ENCODE measurements at regions of chr13 and their contacts with region 1.

Region 1: DNA sequence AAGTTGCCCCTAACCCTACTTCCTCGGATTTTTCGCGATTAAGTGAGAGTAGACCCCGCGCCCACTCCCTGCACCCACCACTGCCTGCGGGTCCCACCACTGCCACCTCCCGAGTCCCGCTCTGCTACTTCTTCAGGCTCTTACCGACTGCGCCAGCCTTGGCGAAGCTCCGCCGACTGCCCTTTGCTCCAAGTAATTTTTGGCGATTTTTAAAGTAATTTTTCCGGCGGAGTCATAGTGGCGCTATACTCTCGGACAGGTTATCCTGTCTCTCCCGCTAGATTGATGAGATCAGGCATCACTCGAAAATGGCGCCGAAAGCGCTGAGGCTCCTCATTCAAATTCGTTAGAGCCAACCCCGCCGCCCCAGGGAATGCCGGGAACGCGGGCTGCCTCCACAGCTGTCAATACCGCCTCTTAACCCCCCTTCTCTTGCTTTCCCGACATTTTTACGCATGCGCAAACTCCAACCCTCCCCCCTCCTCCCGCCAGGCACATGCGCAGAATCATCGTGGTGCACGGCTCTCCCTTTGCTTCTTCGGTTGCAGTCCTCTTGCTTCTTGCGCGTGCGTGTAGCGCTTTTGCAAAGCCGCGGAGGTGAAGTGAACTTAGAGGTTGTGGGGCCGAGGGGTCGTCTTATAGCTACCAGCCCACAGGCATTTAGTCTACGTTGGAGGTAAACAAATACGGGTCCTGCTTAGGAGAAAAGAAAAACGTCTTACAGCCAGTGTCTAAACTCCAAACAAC is 66.6 kb downstream of the KCNRG start:
- DNase-seq: peak; percentile 99
- H3K4me3 Mint-ChIP-seq: peak overlapping the region; percentile 97
- H3K27ac Mint-ChIP-seq: peak overlapping the region; percentile 99
- H3K4me1 Mint-ChIP-seq: peaks cover 11% of the 10 kb centered on the region
- H3K27me3 Mint-ChIP-seq: no peaks in the 10 kb centered on the region
- CTCF ChIP-seq: no peak

Region 2: GRCh38 chr13:49821216-49822030 is 260.4 kb before region 1 on chr13:
- CTCF ChIA-PET with region 1: no interaction called
- POLR2A ChIA-PET with region 1: no interaction called
- intact Hi-C with region 1: no loop called
- DNase-seq: peak; percentile 45
- H3K4me3 Mint-ChIP-seq: no peak overlapping the region
- H3K27ac Mint-ChIP-seq: no peak overlapping the region
- H3K4me1 Mint-ChIP-seq: no peaks in the 10 kb centered on the region
- H3K27me3 Mint-ChIP-seq: no peaks in the 10 kb centered on the region
- CTCF ChIP-seq: no peak

Region 3: DNA sequence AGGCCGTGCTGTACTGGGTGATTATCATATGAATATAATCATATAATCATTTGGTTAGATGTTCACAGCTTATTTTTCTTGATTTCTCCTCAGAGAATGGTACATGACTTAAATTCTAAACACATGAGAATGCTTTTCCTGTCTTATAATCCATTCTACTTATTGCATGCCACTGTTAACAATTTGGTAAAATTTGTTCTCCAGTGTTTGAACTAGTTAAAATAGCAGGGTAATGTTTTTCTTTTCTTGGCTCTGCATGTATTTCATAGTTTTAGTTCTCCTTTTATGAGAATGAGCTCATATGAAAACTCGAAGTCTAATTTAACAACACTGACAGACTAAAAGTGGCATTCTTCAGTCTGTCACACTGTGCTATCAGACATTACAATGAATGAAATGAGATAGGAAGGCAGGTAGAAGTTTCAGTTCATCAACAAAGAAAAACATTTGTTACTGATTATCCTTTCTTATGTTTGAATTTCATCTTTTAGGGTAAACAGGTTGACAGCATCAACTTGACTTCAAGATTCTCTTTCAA is 155.9 kb before region 1 on chr13:
- CTCF ChIA-PET with region 1: no interaction called
- POLR2A ChIA-PET with region 1: no interaction called
- intact Hi-C with region 1: no loop called
- DNase-seq: no peak
- H3K4me3 Mint-ChIP-seq: no peak overlapping the region
- H3K27ac Mint-ChIP-seq: peak overlapping the region; percentile 36
- H3K4me1 Mint-ChIP-seq: no peaks in the 10 kb centered on the region
- H3K27me3 Mint-ChIP-seq: no peaks in the 10 kb centered on the region
- CTCF ChIP-seq: no peak

Region 4: GRCh38 chr13:49936085-49936940 is 145.5 kb before region 1 on chr13 and contains the start of gene SPRYD7:
- CTCF ChIA-PET with region 1: no interaction called
- POLR2A ChIA-PET with region 1: interaction called, 11 read pairs
- intact Hi-C with region 1: no loop called
- DNase-seq: peak; percentile 97
- H3K4me3 Mint-ChIP-seq: peak within 1 kb of the TSS; percentile 88
- H3K27ac Mint-ChIP-seq: peak within 1 kb of the TSS; percentile 72
- H3K4me1 Mint-ChIP-seq: peaks cover 7% of the 10 kb centered on the region
- H3K27me3 Mint-ChIP-seq: no peaks in the 10 kb centered on the region
- CTCF ChIP-seq: peak; percentile 88
- total RNA-seq, gene SPRYD7: 15.1 and 19.5 TPM in 2 replicates

Region 5: DNA sequence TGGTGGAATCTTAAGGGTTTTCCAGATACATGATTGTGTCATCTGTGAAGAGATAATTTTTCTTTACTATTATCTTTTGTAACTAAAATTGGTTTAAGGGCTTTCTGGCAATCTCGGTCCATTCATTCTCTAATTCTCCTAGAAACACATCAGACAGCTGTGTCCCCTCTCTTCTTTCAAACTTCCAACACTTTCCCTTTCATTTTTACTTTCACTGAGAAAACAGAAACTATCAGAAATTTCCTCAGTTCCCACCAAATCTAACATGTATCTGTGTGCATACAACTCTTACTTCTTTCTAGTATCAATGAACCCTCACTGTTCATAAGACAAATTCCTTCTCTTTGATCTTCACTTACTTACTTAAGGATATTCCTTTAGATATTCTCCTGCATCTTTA is 26.4 kb before region 1 on chr13:
- CTCF ChIA-PET with region 1: interaction called, 3 read pairs
- POLR2A ChIA-PET with region 1: interaction called, 13 read pairs
- intact Hi-C with region 1: no loop called
- DNase-seq: no peak
- H3K4me3 Mint-ChIP-seq: peak overlapping the region; percentile 54
- H3K27ac Mint-ChIP-seq: peak overlapping the region; percentile 80
- H3K4me1 Mint-ChIP-seq: peaks cover 7% of the 10 kb centered on the region
- H3K27me3 Mint-ChIP-seq: no peaks in the 10 kb centered on the region
- CTCF ChIP-seq: no peak

Region 6: GRCh38 chr13:50094615-50095293 is 12.9 kb after region 1 on chr13:
- CTCF ChIA-PET with region 1: interaction called, 12 read pairs
- POLR2A ChIA-PET with region 1: interaction called, 4 read pairs
- intact Hi-C with region 1: no loop called
- DNase-seq: peak; percentile 10
- H3K4me3 Mint-ChIP-seq: no peak overlapping the region
- H3K27ac Mint-ChIP-seq: no peak overlapping the region
- H3K4me1 Mint-ChIP-seq: no peaks in the 10 kb centered on the region
- H3K27me3 Mint-ChIP-seq: no peaks in the 10 kb centered on the region
- CTCF ChIP-seq: no peak

Region 7: DNA sequence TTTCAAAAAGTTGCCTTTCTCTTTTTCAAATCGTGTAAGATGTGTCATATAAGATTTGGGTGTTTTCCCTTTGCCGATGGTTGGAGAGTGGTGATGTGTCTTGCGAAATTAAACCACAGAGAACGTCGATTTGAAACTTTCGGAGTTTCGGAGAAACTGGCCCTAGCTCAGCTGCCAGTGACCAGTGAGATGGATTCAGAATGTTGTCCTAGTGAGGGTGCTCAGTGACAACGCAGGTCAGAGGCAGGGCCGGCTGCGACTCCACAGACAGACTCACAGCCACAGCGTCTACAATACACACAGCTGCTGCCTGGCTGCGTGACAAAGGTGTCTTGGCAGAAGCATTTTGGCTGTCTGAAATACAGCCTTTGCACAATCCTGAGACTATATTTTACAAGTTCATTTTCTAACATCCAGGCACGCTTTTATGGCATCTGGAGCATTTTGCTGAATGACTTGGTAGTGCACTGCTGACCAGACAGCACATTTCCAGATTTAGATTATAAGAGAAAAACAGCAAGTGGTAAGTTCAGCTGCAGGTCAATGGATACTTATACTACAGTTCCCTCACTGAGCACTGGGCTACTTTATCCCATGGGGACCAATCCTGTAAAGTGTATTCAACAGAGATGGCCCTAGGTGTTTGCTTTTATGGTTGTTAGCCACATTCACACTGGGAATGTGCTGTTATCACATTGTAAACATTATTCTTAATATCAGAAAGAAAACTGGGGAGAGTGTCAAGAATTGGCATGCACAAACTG is 140.9 kb after region 1 on chr13:
- CTCF ChIA-PET with region 1: interaction called, 6 read pairs
- POLR2A ChIA-PET with region 1: interaction called, 35 read pairs
- intact Hi-C with region 1: loop called (anchors 5 kb)
- DNase-seq: peak; percentile 95
- H3K4me3 Mint-ChIP-seq: peak overlapping the region; percentile 72
- H3K27ac Mint-ChIP-seq: peak overlapping the region; percentile 98
- H3K4me1 Mint-ChIP-seq: peaks cover 40% of the 10 kb centered on the region
- H3K27me3 Mint-ChIP-seq: no peaks in the 10 kb centered on the region
- CTCF ChIP-seq: no peak

Region 8: DNA sequence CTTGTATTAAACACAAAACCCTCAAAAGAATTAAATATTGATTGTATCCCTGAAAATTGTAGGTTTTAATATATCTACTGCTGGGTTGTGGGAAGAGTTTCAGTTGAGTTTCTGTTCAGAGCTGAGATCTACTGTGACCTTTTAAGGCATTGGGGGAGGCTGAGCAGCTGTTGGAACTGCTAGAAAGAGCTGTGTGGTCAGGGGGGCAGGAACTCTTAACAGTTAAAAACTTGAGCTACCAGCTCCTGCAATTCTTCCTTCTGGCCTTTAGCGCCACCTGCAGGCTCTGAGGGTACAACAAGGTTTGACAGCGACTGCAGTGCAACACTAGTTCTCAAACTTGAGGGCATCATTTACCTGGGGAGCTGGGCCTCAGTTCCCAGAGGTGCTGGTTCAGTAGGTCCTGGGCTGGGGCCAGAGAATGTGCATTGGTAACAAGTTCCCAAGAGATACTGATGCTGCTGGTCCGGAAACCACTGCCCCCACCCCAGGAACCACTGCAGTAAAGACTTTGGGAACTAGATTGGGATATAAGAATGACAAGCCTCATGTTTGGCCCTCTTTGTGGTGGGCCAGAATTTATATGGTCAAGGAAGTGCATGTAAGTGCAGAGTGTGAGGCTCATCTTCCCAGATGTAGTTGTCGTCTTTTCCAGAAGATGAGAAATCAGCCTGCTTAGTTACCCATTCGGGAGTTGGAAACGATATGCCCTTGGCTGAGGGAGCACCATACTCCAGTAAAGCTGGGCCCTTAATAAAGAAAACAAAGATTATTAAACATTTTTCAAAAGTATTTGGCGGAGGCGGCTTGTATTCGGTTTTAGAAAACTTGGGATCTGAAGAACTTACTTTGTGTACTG is 830.3 kb after region 1 on chr13:
- CTCF ChIA-PET with region 1: interaction called, 28 read pairs
- POLR2A ChIA-PET with region 1: interaction called, 20 read pairs
- intact Hi-C with region 1: loop called (anchors 1 kb)
- DNase-seq: peak; percentile 90
- H3K4me3 Mint-ChIP-seq: peak overlapping the region; percentile 30
- H3K27ac Mint-ChIP-seq: no peak overlapping the region
- H3K4me1 Mint-ChIP-seq: peaks cover 16% of the 10 kb centered on the region
- H3K27me3 Mint-ChIP-seq: no peaks in the 10 kb centered on the region
- CTCF ChIP-seq: peak; percentile 90